SK-N-SH (cell line): ENCODE measurements at regions of chr4 and their contacts with region 1.

Region 1: GRCh38 chr4:139077567-139078355 is 62.2 kb downstream of the NOCT start:
- DNase-seq: no peak
- H3K4me3 ChIP-seq: no peak overlapping the region
- H3K27ac ChIP-seq: peak overlapping the region in 1 of 2 experiments; percentile 34; a peak in 1 of 4 replicates
- H3K4me1 ChIP-seq: peaks cover 9 to 13% of the 10 kb centered on the region in 2 experiments; a peak in 2 of 4 replicates
- H3K27me3 ChIP-seq: no peaks in the 10 kb centered on the region
- CTCF ChIP-seq: no peak
- EP300 ChIP-seq: no peak
- RAD21 ChIP-seq: no peak

Region 2: GRCh38 chr4:139167774-139168444 is 90.1 kb after region 1 on chr4:
- CTCF ChIA-PET with region 1: interaction called, 11 read pairs
- POLR2A ChIA-PET with region 1: no interaction called
- DNase-seq: peak; percentile 48
- H3K4me3 ChIP-seq: no peak overlapping the region
- H3K27ac ChIP-seq: no peak overlapping the region
- H3K4me1 ChIP-seq: peaks cover 0 to 6% of the 10 kb centered on the region in 2 experiments; a peak in 1 of 4 replicates
- H3K27me3 ChIP-seq: no peaks in the 10 kb centered on the region
- CTCF ChIP-seq: peak; percentile 67
- EP300 ChIP-seq: no peak
- RAD21 ChIP-seq: peak; percentile 68